Caco-2 (cell line): ENCODE measurements at regions of chr10 and their contacts with region 1.

Region 1: GRCh38 chr10:24432472-24433416 is 223.8 kb downstream of the KIAA1217 start:
- DNase-seq: peak; percentile 87 to 89
- H3K4me3 ChIP-seq: no peak overlapping the region
- H3K4me3 Mint-ChIP-seq: peak overlapping the region; percentile 63
- H3K27ac Mint-ChIP-seq: peak overlapping the region; percentile 93
- H3K4me1 ChIP-seq: peaks cover 60% of the 10 kb centered on the region
- H3K4me1 Mint-ChIP-seq: peaks cover 30% of the 10 kb centered on the region
- H3K27me3 ChIP-seq: no peaks in the 10 kb centered on the region
- H3K27me3 Mint-ChIP-seq: no peaks in the 10 kb centered on the region
- CTCF ChIP-seq: no peak

Region 2: GRCh38 chr10:24370877-24371795 is 61.6 kb before region 1 on chr10:
- CTCF ChIA-PET with region 1: no interaction called
- POLR2A ChIA-PET with region 1: no interaction called
- intact Hi-C with region 1: loop called (anchors 2 kb)
- DNase-seq: peak in 1 of 2 experiments; percentile 43
- H3K4me3 ChIP-seq: no peak overlapping the region
- H3K4me3 Mint-ChIP-seq: no peak overlapping the region
- H3K27ac Mint-ChIP-seq: no peak overlapping the region
- H3K4me1 ChIP-seq: peaks cover 25% of the 10 kb centered on the region
- H3K4me1 Mint-ChIP-seq: peaks cover 27% of the 10 kb centered on the region
- H3K27me3 ChIP-seq: no peaks in the 10 kb centered on the region
- H3K27me3 Mint-ChIP-seq: no peaks in the 10 kb centered on the region
- CTCF ChIP-seq: peak in 1 of 2 experiments; percentile 33

Region 3: DNA sequence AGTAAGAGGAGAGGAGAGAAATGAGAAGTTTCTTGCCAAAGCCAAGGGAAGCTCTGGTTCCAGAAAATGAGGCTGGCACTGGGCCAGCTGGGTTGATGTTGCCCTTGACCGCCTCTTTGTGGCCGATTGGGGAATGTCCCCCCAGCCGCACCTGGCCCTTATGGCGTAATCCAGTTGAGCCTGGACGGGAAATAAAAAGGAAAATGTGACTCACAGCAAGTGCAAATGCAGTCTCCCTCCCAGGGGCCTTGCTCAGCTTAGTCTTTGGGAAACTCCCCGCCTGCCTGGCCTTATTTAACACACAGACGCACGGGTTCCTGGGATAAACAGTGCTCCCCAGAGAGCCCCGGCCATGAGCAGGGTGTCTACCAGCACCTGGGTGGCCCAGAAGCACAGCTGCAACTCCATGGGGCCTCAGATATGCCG is 49.0 kb before region 1 on chr10:
- CTCF ChIA-PET with region 1: interaction called, 3 read pairs
- POLR2A ChIA-PET with region 1: no interaction called
- intact Hi-C with region 1: loop called (anchors 1 kb)
- DNase-seq: peak; percentile 87 to 90
- H3K4me3 ChIP-seq: no peak overlapping the region
- H3K4me3 Mint-ChIP-seq: peak overlapping the region; percentile 58
- H3K27ac Mint-ChIP-seq: peak overlapping the region; percentile 92
- H3K4me1 ChIP-seq: peaks cover 31% of the 10 kb centered on the region
- H3K4me1 Mint-ChIP-seq: peaks cover 23% of the 10 kb centered on the region
- H3K27me3 ChIP-seq: no peaks in the 10 kb centered on the region
- H3K27me3 Mint-ChIP-seq: no peaks in the 10 kb centered on the region
- CTCF ChIP-seq: peak; percentile 60 to 67

Region 4: DNA sequence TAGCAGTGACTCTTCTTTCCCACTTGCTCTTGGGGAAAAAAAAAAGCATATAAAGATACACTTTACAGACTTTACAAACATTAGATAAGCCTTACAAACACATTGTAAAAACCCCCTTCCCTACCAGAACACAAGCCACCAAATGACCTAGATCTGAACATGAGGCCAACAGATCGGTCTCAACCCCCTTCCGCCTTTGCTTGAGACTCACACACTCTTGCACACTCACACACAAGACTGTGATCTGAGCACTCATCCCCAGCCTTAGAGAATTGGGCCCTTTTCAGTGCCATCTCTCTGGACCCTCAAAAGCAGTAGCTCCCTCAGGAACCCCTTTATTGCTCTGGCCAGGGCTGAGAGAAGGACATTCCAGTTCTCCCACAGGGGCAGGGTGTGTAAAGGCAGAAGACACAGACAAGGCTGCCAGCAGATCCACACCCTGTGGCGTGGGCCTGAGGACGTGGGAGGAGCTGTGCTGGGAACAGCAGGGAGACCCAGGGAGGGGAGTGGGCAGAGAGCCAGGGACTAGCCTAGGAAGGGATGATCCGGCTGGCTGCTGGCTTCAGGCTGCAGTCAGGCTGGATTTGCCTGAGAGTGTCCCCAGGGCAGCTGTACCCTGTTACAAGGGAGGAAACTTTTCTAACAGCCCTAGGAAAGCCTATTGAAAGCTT is 17.2 kb before region 1 on chr10:
- CTCF ChIA-PET with region 1: interaction called, 4 read pairs
- POLR2A ChIA-PET with region 1: interaction called, 5 read pairs
- intact Hi-C with region 1: loop called (anchors 1 kb)
- DNase-seq: peak; percentile 51 to 62
- H3K4me3 ChIP-seq: no peak overlapping the region
- H3K4me3 Mint-ChIP-seq: peak overlapping the region; percentile 16
- H3K27ac Mint-ChIP-seq: peak overlapping the region; percentile 63
- H3K4me1 ChIP-seq: peaks cover 44% of the 10 kb centered on the region
- H3K4me1 Mint-ChIP-seq: peaks cover 29% of the 10 kb centered on the region
- H3K27me3 ChIP-seq: no peaks in the 10 kb centered on the region
- H3K27me3 Mint-ChIP-seq: no peaks in the 10 kb centered on the region
- CTCF ChIP-seq: no peak

Region 5: GRCh38 chr10:24457769-24458306 is 25.1 kb after region 1 on chr10:
- CTCF ChIA-PET with region 1: no interaction called
- POLR2A ChIA-PET with region 1: interaction called, 4 read pairs
- intact Hi-C with region 1: loop called (anchors 2 kb)
- DNase-seq: peak; percentile 38 to 63
- H3K4me3 ChIP-seq: no peak overlapping the region
- H3K4me3 Mint-ChIP-seq: no peak overlapping the region
- H3K27ac Mint-ChIP-seq: peak overlapping the region; percentile 32
- H3K4me1 ChIP-seq: peaks cover 39% of the 10 kb centered on the region
- H3K4me1 Mint-ChIP-seq: peaks cover 38% of the 10 kb centered on the region
- H3K27me3 ChIP-seq: no peaks in the 10 kb centered on the region
- H3K27me3 Mint-ChIP-seq: no peaks in the 10 kb centered on the region
- CTCF ChIP-seq: no peak

Region 6: DNA sequence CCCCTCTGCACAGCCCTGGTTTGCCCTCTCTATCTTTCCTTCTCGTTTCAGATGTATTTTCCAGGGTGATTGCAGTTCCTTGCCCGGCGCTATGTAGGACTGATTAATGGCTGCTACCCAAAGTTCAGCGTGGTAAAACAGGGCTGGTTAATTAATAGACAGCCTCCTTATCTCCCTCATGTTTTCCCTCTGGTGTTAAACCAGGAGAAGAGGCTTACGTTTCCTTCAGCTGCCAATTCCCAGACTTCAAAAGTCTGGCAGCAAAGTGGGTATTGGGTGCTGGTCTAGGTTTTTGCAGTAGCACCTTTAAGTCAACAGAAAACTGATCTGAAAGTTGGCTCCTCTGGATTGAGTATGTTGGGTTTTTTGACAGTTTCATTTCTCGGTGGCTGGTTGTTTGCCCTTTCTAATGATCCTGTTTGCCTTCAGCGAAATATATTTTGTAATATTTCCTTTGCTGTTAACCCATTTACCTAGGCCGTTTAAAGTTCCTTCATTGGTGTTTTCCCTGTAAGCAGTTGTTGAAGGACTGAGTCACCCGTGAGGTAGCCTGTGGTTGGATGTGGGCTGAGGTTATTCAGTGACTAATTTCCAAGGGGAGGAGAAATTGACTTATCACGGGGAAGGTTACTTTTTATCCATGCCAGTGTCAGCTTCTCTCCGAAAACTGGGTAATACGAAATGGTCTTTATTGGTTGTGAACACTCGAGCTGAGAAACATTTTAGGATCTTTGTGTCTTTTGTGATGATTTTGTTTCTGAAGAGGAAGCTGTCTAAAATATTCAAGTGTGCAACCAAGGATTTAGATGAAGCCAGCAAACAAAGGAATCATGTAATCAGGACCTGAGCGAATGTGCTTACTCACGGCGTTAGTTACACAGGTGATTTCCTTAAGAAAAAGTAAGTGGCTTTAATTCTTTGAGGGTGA is 33.4 kb after region 1 on chr10:
- CTCF ChIA-PET with region 1: interaction called, 4 read pairs
- POLR2A ChIA-PET with region 1: interaction called, 6 read pairs
- intact Hi-C with region 1: loop called (anchors 1 kb)
- DNase-seq: peak; percentile 78
- H3K4me3 ChIP-seq: peak overlapping the region; percentile 37
- H3K4me3 Mint-ChIP-seq: peak overlapping the region; percentile 73
- H3K27ac Mint-ChIP-seq: peak overlapping the region; percentile 71
- H3K4me1 ChIP-seq: peaks cover 52% of the 10 kb centered on the region
- H3K4me1 Mint-ChIP-seq: peaks cover 66% of the 10 kb centered on the region
- H3K27me3 ChIP-seq: no peaks in the 10 kb centered on the region
- H3K27me3 Mint-ChIP-seq: no peaks in the 10 kb centered on the region
- CTCF ChIP-seq: no peak